ENCODE measurements at regions of chr17 and their contacts with region 1.

Region 1: DNA sequence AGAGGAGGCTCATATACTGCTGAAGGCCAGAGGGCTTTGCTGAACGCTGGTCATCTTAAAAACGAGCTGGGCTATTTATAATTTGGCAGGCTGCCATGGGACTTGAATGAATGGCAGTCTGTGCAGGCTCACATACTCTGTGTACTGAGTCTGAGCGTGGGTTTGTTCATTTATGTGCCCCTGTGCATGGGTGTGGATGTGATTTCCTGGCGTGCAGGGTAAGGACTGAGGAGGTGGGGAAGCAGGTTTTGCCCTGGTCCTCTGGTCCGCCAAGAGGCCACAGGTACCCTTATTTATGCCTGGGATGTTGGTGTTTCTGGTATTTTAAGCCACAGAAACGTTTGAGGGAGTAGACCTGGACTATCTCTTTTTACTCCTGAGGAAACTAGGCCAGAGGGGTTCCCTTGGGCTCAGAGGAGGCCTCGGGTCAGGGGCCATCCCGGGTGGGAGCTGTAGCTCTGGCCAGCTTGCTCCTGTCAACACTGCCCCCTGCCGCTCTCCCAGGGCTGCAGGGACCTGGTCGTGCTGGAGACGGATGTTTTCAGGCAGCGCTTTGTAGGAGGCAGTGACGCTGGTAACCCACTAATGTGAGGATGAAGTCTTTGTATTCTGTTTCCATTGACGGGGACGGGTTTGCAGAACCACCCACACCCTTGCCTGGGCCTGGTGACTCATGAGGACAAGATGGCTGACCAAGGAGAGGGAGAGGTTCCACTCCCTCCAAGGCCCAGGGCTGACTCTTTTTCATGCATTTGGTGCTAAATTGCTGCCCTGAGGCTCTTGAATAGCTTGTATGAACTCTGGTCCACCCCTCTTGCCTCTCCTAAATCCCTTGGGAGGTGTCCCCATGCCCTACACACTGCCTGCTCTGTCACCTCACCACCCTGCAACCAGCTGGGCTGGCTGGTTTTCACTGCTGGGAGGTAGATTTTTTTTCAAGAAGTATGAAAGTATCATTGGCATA is 184.5 kb downstream of the MSI2 start:
- DNase-seq: peak; percentile 93
- H3K4me3 Mint-ChIP-seq: no peak overlapping the region
- H3K27ac Mint-ChIP-seq: peak overlapping the region; percentile 92
- H3K4me1 Mint-ChIP-seq: peaks cover 80% of the 10 kb centered on the region
- H3K27me3 Mint-ChIP-seq: no peaks in the 10 kb centered on the region

Region 2: DNA sequence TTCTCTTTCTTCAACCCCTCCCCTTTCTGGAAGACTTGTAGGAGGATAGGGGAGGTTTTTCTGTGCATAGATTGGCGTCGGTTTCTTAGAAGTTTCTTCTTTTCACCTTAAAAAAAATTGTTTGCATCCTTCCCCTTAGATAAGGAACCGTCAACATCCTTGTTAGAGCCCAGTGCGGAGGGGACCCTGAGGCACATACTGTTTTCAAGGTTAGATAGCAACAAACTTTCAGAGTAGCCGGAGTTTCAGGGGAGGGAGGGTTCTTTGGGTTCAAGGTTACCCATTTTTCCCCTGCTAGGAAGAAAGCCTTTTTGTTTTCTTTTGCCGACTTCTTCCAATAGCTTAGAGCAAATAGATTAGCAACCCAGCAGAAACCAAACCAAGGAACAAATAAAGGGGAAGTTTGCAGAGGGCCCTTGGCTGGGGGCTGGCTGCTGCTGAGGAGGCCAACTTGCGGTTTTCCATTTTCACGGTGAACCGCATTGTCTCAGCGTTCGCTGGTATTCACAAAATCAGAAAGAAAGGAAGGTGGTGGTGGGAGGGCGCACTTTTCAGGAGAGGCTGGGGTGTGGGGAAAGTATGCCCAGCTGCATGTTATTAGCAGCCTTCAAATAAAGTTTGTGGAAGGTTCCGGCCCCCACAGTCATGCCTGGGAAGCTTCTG is 155.7 kb before region 1 on chr17:
- CTCF ChIA-PET with region 1: interaction called, 5 read pairs
- intact Hi-C with region 1: loop called (anchors 2 kb)
- DNase-seq: peak; percentile 65
- H3K4me3 Mint-ChIP-seq: peak overlapping the region; percentile 50
- H3K27ac Mint-ChIP-seq: no peak overlapping the region
- H3K4me1 Mint-ChIP-seq: peaks cover 59% of the 10 kb centered on the region
- H3K27me3 Mint-ChIP-seq: no peaks in the 10 kb centered on the region

Region 3: DNA sequence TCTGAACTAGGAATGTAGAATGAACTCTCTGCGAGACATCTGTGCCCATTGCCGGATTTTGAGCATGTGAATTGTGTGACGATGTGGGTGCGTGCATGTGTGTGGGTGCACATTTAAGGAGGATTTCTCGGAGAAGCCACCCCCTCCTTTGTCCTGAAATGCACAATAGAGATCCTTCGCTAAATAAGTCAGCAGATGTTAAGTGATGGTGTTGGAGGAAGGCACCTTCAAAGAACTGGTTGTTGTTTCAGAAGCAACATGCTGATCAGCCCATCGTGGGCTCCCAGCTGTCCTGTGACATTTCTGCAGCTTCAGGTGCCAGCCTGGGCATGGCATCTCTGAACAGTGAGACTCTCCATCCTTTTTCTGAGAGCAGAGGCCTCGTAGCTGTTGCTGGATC is 10.4 kb after region 1 on chr17:
- CTCF ChIA-PET with region 1: interaction called, 3 read pairs
- intact Hi-C with region 1: loop called (anchors 1 kb)
- DNase-seq: peak; percentile 56
- H3K4me3 Mint-ChIP-seq: no peak overlapping the region
- H3K27ac Mint-ChIP-seq: peak overlapping the region; percentile 52
- H3K4me1 Mint-ChIP-seq: peaks cover 70% of the 10 kb centered on the region
- H3K27me3 Mint-ChIP-seq: no peaks in the 10 kb centered on the region

Region 4: DNA sequence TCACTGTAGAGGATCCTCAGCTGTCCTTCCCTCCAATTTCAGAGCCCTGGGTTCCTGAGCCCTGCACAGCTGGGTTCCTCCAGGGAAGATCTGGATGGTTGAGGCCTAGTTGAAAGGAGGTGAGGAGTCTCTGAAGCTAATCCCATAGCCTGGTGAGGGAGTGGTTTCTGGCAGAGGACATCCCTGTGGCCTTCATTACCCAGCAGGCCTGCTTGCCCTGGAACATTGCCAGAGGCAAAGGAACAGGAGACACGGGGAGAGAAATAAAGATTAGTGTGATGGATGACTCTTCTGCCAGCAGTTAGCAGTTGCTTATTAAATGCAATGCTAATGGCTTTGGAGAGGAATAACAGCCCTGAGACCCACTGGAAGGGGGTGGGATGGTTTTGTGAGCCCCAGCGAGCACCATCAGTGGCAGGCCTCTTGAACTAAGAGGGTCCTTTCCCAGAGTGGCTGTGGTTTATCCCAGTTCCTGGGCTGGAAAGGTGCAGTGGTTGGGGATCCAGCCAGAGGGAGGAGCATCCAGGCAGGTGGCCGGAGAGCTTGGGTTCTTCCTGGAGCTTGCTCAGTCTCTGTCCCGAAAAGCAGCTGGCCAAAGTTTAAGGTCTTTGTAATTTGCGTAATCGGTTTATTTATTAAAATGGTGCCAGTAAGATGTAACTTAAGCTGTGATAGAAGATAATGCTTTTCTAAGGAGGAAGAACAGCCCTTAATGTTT is 94.6 kb after region 1 on chr17:
- CTCF ChIA-PET with region 1: no interaction called
- intact Hi-C with region 1: loop called (anchors 5 kb)
- DNase-seq: no peak
- H3K4me3 Mint-ChIP-seq: no peak overlapping the region
- H3K27ac Mint-ChIP-seq: no peak overlapping the region
- H3K4me1 Mint-ChIP-seq: peaks cover 34% of the 10 kb centered on the region
- H3K27me3 Mint-ChIP-seq: no peaks in the 10 kb centered on the region

Measured in activated naive CD4-positive, alpha-beta T cell treated with anti-CD3 and anti-CD28 coated beads for 36 hours (primary cell).